Caco-2 (cell line): ENCODE measurements at regions of chr17 and their contacts with region 1.

Region 1: DNA sequence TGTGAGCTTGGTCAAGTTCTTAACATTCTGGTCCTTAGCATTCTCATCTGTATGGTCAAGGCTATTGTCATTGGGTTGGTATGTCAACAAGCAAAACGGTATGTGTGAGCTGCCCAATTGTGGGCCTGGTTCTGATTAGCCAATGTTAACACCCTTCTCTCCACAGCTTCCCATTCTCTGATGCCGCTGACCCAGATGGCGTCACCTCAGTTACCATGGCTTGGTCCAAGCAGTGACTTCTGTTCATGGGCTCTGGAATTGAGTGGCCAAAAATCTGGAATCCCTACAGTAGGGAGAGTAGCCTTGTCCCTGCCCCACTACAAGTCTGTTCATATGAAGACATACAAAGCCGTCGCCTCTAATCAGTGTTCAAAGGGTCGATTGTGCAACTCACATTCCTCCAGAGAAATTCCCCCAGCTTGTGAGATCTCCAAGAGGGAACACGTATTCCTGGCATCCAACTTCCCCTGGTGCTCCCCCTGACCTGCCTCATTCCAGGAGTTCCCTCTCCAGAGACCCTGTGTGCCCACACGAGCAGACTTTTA is 15.8 kb downstream of the TMEM98 start:
- DNase-seq: peak; percentile 86 to 94
- H3K4me3 ChIP-seq: no peak overlapping the region
- H3K4me3 Mint-ChIP-seq: peak overlapping the region; percentile 55
- H3K27ac Mint-ChIP-seq: peak overlapping the region; percentile 94
- H3K4me1 ChIP-seq: peaks cover 45% of the 10 kb centered on the region
- H3K4me1 Mint-ChIP-seq: peaks cover 44% of the 10 kb centered on the region
- H3K27me3 ChIP-seq: no peaks in the 10 kb centered on the region
- H3K27me3 Mint-ChIP-seq: no peaks in the 10 kb centered on the region
- CTCF ChIP-seq: no peak

Region 2: GRCh38 chr17:32927724-32928585 is 15.8 kb before region 1 on chr17 and contains the start of gene TMEM98:
- CTCF ChIA-PET with region 1: interaction called, 3 read pairs
- POLR2A ChIA-PET with region 1: interaction called, 11 read pairs
- intact Hi-C with region 1: loop called (anchors 2 kb)
- DNase-seq: peak in 1 of 2 experiments; percentile 82
- H3K4me3 ChIP-seq: peak within 1 kb of the TSS; percentile 77
- H3K4me3 Mint-ChIP-seq: no peak within 1 kb of the TSS
- H3K27ac Mint-ChIP-seq: peak within 1 kb of the TSS; percentile 65
- H3K4me1 ChIP-seq: peaks cover 23% of the 10 kb centered on the region
- H3K4me1 Mint-ChIP-seq: no peaks in the 10 kb centered on the region
- H3K27me3 ChIP-seq: no peaks in the 10 kb centered on the region
- H3K27me3 Mint-ChIP-seq: no peaks in the 10 kb centered on the region
- CTCF ChIP-seq: no peak
- total RNA-seq, gene TMEM98: 189 and 229 TPM in 2 replicates

Region 3: GRCh38 chr17:32954477-32954876 is 10.8 kb after region 1 on chr17:
- CTCF ChIA-PET with region 1: interaction called, 5 read pairs
- POLR2A ChIA-PET with region 1: no interaction called
- intact Hi-C with region 1: loop called (anchors 1 kb)
- DNase-seq: peak; percentile 66 to 79
- H3K4me3 ChIP-seq: no peak overlapping the region
- H3K4me3 Mint-ChIP-seq: peak overlapping the region; percentile 61
- H3K27ac Mint-ChIP-seq: peak overlapping the region; percentile 39
- H3K4me1 ChIP-seq: peaks cover 36% of the 10 kb centered on the region
- H3K4me1 Mint-ChIP-seq: peaks cover 33% of the 10 kb centered on the region
- H3K27me3 ChIP-seq: no peaks in the 10 kb centered on the region; the same call in 1 of the 2 replicates
- H3K27me3 Mint-ChIP-seq: no peaks in the 10 kb centered on the region
- CTCF ChIP-seq: no peak

Region 4: DNA sequence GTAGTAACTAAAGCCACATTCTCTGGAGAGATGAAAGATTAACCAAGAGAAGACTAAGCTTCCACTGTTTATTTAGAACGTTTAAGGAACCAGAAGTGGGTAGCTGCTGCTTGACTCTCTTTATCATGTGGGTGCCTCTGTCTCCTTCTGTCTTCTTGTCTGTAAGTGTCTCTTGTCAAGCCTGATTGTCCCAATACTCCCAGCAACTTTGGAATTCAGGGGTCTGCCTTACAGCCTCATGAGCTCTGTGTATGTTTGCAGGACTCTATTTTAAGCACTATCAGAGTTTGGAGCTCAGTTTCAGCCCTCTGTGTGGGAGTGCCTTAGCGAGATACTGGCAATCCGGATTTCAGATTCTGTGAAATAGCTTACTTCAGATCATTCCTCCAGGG is 18.6 kb after region 1 on chr17:
- CTCF ChIA-PET with region 1: interaction called, 7 read pairs
- POLR2A ChIA-PET with region 1: interaction called, 10 read pairs
- intact Hi-C with region 1: loop called (anchors 2 kb)
- DNase-seq: peak; percentile 50 to 56
- H3K4me3 ChIP-seq: no peak overlapping the region
- H3K4me3 Mint-ChIP-seq: peak overlapping the region; percentile 29
- H3K27ac Mint-ChIP-seq: peak overlapping the region; percentile 61
- H3K4me1 ChIP-seq: peaks cover 47% of the 10 kb centered on the region
- H3K4me1 Mint-ChIP-seq: peaks cover 65% of the 10 kb centered on the region
- H3K27me3 ChIP-seq: no peaks in the 10 kb centered on the region
- H3K27me3 Mint-ChIP-seq: no peaks in the 10 kb centered on the region
- CTCF ChIP-seq: no peak

Region 5: GRCh38 chr17:33049781-33050414 is 106.2 kb after region 1 on chr17:
- CTCF ChIA-PET with region 1: no interaction called
- POLR2A ChIA-PET with region 1: no interaction called
- intact Hi-C with region 1: loop called (anchors 1 kb)
- DNase-seq: peak; percentile 50 to 70
- H3K4me3 ChIP-seq: no peak overlapping the region
- H3K4me3 Mint-ChIP-seq: no peak overlapping the region
- H3K27ac Mint-ChIP-seq: no peak overlapping the region
- H3K4me1 ChIP-seq: no peaks in the 10 kb centered on the region
- H3K4me1 Mint-ChIP-seq: no peaks in the 10 kb centered on the region
- H3K27me3 ChIP-seq: no peaks in the 10 kb centered on the region
- H3K27me3 Mint-ChIP-seq: peaks cover 31% of the 10 kb centered on the region
- CTCF ChIP-seq: peak; percentile 92 to 93

Region 6: DNA sequence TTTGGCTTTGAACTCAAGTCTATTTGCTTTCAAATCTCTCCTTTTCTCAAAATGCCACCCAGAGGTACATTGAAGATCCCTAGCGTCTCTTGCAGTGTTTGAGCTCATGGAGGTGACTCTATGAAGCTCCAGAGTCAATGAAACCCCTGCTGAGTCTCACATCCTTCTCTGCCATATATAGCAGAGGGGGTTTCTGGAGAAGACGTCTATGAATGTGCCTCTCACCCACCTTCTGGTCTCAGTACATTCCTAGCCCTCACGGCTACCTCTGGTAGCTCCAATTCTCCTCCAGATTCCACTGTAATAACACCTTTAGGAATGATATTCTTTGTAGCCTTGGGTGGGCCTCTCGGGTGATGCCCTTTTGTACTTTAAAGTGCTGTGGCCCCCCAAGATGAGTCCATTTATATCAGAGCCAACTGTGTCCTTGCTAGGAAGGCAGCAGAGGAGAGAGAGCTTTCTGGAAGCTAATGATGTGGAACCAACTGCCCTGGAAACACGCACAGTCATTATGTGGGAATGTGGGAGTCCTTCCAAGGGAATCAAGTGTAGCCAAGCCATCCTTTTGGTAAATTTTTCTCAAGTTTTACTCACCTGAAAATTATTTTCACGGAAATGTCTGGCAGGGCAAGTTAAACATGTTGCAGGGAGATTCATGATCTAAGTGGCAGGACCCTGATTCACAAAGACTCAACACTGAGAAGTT is 226.0 kb after region 1 on chr17:
- CTCF ChIA-PET with region 1: interaction called, 11 read pairs
- POLR2A ChIA-PET with region 1: no interaction called
- intact Hi-C with region 1: no loop called
- DNase-seq: no peak
- H3K4me3 ChIP-seq: no peak overlapping the region
- H3K4me3 Mint-ChIP-seq: no peak overlapping the region
- H3K27ac Mint-ChIP-seq: no peak overlapping the region
- H3K4me1 ChIP-seq: no peaks in the 10 kb centered on the region
- H3K4me1 Mint-ChIP-seq: no peaks in the 10 kb centered on the region
- H3K27me3 ChIP-seq: no peaks in the 10 kb centered on the region
- H3K27me3 Mint-ChIP-seq: peaks cover 39% of the 10 kb centered on the region
- CTCF ChIP-seq: no peak